ENCODE measurements at regions of chr1 and their contacts with region 1.

Region 1: GRCh38 chr1:15918962-15919715 is 56.8 kb downstream of the ZBTB17 start:
- DNase-seq: peak in 1 of 2 donors; percentile 67
- ATAC-seq: peak; percentile 74 to 88 (median 82)
- H3K4me3 ChIP-seq: no peak overlapping the region
- H3K4me3 Mint-ChIP-seq: no peak overlapping the region
- H3K27ac ChIP-seq: no peak overlapping the region
- H3K27ac Mint-ChIP-seq: peak overlapping the region; percentile 29 to 75
- H3K4me1 ChIP-seq: peaks cover 11% of the 10 kb centered on the region
- H3K4me1 Mint-ChIP-seq: peaks cover 27 to 35% of the 10 kb centered on the region in 2 donors
- H3K27me3 ChIP-seq: no peaks in the 10 kb centered on the region
- H3K27me3 Mint-ChIP-seq: no peaks in the 10 kb centered on the region
- CTCF ChIP-seq: no peak

Region 2: DNA sequence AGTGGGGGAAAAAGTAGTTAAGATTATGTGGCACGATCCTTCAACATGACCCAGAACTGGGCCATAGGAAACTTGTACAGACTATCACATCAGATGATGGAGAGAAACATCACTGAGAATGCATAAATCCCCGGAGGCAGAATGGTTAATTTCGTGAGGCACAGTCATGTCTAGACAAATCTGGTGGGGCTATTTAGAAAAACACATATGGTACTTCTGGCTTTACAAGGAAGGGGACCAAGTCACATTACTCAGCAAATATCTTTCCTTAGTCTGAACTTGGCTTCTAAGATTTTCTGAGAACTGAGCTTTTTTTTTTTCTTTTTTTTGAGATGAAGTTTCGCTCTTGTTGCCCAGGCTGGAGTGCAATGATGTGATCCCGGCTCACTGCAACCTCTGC is 102.5 kb before region 1 on chr1:
- intact Hi-C with region 1: loop called (anchors 5 kb)
- DNase-seq: no peak
- ATAC-seq: no peak
- H3K4me3 ChIP-seq: no peak overlapping the region
- H3K4me3 Mint-ChIP-seq: no peak overlapping the region
- H3K27ac ChIP-seq: no peak overlapping the region
- H3K27ac Mint-ChIP-seq: no peak overlapping the region
- H3K4me1 ChIP-seq: no peaks in the 10 kb centered on the region
- H3K4me1 Mint-ChIP-seq: peaks cover 5% of the 10 kb centered on the region in 2 donors
- H3K27me3 ChIP-seq: no peaks in the 10 kb centered on the region
- H3K27me3 Mint-ChIP-seq: no peaks in the 10 kb centered on the region
- CTCF ChIP-seq: no peak

Region 3: DNA sequence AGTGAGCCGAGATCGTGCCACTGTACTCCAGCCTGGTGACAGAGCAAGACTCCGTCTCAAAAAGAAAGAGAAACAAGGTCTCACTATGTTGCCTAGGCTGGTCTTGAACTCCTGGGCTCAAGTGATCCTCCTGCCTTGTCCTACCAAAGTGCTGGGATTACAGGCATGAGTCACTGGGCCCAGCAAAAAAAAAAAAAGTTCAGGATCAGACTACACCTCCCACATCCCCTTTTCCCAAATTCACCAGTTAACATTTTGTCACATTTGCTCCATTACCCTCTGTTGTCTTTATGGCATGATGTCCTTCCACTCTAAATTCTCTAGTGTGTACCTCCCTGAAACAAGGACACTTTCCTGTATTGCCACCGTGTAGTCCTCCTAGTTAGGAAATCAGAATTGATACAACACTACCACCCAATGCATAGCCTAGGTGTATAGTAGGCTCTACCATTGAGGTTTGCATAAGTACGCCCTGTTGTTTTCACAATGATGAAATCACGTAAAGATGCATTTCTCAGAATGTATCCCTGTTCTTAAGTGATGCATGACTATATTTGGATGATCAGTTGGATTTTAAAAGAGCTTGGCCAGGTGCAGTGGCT is 61.0 kb before region 1 on chr1:
- intact Hi-C with region 1: no loop called
- DNase-seq: no peak
- ATAC-seq: no peak
- H3K4me3 ChIP-seq: no peak overlapping the region
- H3K4me3 Mint-ChIP-seq: no peak overlapping the region
- H3K27ac ChIP-seq: no peak overlapping the region
- H3K27ac Mint-ChIP-seq: peak overlapping the region in 1 of 2 donors; percentile 79
- H3K4me1 ChIP-seq: peaks cover 12% of the 10 kb centered on the region
- H3K4me1 Mint-ChIP-seq: peaks cover 6 to 23% of the 10 kb centered on the region in 2 donors
- H3K27me3 ChIP-seq: no peaks in the 10 kb centered on the region
- H3K27me3 Mint-ChIP-seq: no peaks in the 10 kb centered on the region
- CTCF ChIP-seq: no peak

Region 4: DNA sequence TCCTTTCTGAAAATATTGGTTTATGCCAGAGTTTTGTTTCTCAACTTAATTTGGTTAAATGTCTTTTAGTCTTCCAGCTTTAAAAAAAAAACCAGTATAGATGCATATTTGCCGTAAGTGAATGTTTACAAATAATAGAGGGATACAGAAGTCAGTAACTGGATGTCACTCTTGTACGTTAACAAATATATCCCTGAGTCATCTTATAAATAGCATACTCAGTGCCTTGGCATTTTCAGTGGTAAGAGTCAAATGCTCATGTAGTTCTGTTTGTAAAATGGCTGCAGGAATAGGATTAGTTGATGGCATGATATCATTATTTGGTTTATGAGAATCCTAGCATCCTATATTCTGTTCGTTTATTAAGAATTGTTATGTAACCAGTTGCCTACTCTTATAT is 16.3 kb before region 1 on chr1:
- intact Hi-C with region 1: no loop called
- DNase-seq: no peak
- ATAC-seq: no peak
- H3K4me3 ChIP-seq: no peak overlapping the region
- H3K4me3 Mint-ChIP-seq: no peak overlapping the region
- H3K27ac ChIP-seq: no peak overlapping the region
- H3K27ac Mint-ChIP-seq: no peak overlapping the region
- H3K4me1 ChIP-seq: peaks cover 7% of the 10 kb centered on the region
- H3K4me1 Mint-ChIP-seq: peaks cover 16 to 20% of the 10 kb centered on the region in 2 donors
- H3K27me3 ChIP-seq: no peaks in the 10 kb centered on the region
- H3K27me3 Mint-ChIP-seq: no peaks in the 10 kb centered on the region
- CTCF ChIP-seq: no peak

Region 5: GRCh38 chr1:16032388-16033103 is 113.4 kb after region 1 on chr1:
- intact Hi-C with region 1: no loop called
- DNase-seq: peak; percentile 37 to 60
- ATAC-seq: peak; percentile 75 to 98 (median 95)
- H3K4me3 ChIP-seq: no peak overlapping the region
- H3K4me3 Mint-ChIP-seq: no peak overlapping the region
- H3K27ac ChIP-seq: no peak overlapping the region
- H3K27ac Mint-ChIP-seq: no peak overlapping the region
- H3K4me1 ChIP-seq: peaks cover 3% of the 10 kb centered on the region
- H3K4me1 Mint-ChIP-seq: peaks cover 0 to under 1% of the 10 kb centered on the region in 2 donors
- H3K27me3 ChIP-seq: peaks cover 3% of the 10 kb centered on the region
- H3K27me3 Mint-ChIP-seq: peaks cover 7 to 16% of the 10 kb centered on the region in 2 donors
- CTCF ChIP-seq: peak; percentile 53